MCF 10A (cell line): ENCODE measurements at regions of chr16 and their contacts with region 1.

Region 1: GRCh38 chr16:70395345-70395901 is 43.5 kb downstream of the ST3GAL2 start:
- DNase-seq: peak; percentile 64
- H3K4me3 Mint-ChIP-seq: no peak overlapping the region
- H3K27ac Mint-ChIP-seq: no peak overlapping the region
- H3K4me1 Mint-ChIP-seq: peaks cover 14% of the 10 kb centered on the region
- H3K27me3 Mint-ChIP-seq: no peaks in the 10 kb centered on the region
- CTCF ChIP-seq: peak; percentile 59

Region 2: GRCh38 chr16:70454222-70455034 is 59.0 kb after region 1 on chr16 and contains the start of gene FCSK:
- CTCF ChIA-PET with region 1: interaction called, 5 read pairs
- POLR2A ChIA-PET with region 1: interaction called, 14 read pairs
- intact Hi-C with region 1: loop called (anchors 2 kb)
- DNase-seq: peak; percentile 75
- H3K4me3 Mint-ChIP-seq: peak within 1 kb of the TSS; percentile 92
- H3K27ac Mint-ChIP-seq: peak within 1 kb of the TSS; percentile 89
- H3K4me1 Mint-ChIP-seq: peaks cover 6% of the 10 kb centered on the region
- H3K27me3 Mint-ChIP-seq: no peaks in the 10 kb centered on the region
- CTCF ChIP-seq: no peak
- total RNA-seq, gene FCSK: 13.7 and 19.0 TPM in 2 replicates

Region 3: DNA sequence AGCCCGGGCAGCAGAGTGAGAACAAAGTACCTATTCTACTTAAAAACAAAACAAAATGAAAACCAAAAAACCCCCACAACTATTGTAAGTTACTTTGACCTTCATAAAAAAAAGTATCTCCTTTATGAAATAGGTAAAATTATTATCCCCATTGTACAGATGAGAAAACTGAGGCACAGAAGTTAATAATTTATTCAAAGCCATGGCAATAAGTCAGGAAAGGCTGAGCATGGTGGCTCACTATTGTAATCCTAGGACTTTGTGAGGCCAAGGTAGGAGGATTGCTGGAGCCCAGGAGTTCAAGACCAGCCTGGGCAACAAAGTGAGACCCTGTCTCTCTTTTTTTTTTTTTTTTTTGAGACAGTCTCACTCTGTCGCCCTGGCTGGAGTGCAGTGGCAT is 89.4 kb after region 1 on chr16:
- CTCF ChIA-PET with region 1: interaction called, 10 read pairs
- POLR2A ChIA-PET with region 1: no interaction called
- intact Hi-C with region 1: no loop called
- DNase-seq: no peak
- H3K4me3 Mint-ChIP-seq: no peak overlapping the region
- H3K27ac Mint-ChIP-seq: no peak overlapping the region
- H3K4me1 Mint-ChIP-seq: no peaks in the 10 kb centered on the region
- H3K27me3 Mint-ChIP-seq: no peaks in the 10 kb centered on the region
- CTCF ChIP-seq: no peak

Region 4: DNA sequence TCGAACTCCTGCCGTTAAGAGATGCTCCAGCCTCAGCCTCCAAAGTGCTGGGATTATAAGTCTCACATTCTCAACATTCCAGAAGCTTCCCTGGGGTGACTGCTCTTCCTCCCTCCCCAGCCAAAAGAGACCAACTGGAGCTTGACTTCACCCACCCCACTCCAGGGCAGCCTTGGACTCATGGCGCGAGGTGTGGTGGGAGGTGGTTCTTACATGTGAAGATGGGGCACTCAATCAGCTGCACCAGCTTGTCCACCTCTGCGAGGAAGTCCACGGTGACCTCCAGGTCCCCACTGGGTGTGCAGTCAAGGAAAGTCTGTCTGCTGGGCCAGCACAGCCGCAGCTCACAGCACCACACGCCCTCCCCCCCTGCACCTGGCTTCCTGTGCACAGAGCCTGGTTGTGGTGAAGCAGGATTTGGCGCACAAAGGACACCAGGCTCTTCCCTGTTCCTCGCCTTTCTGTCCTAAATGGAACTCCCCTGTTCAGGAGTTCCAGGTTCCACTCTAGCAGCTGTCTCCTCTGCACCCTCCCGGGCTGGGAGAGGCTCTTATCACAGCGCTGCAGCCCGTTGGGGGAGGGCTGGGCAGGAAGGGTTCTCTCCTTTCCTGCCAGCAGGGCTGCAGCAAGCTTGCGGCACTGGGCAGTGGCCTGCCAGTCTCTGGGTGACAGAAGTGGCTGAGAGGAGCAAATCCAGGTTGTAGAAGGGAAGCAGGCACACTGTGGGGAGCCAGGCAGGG is 300.1 kb after region 1 on chr16:
- CTCF ChIA-PET with region 1: no interaction called
- POLR2A ChIA-PET with region 1: no interaction called
- intact Hi-C with region 1: no loop called
- DNase-seq: no peak
- H3K4me3 Mint-ChIP-seq: no peak overlapping the region
- H3K27ac Mint-ChIP-seq: no peak overlapping the region
- H3K4me1 Mint-ChIP-seq: peaks cover 52% of the 10 kb centered on the region
- H3K27me3 Mint-ChIP-seq: no peaks in the 10 kb centered on the region
- CTCF ChIP-seq: no peak